Posterior vena cava (tissue), 2 donors: ENCODE measurements at regions of chr19 and their contacts with region 1.

Region 1: GRCh38 chr19:34482380-34483250 is 1.1 kb downstream of the WTIP start:
- DNase-seq: peak; percentile 54

Region 2: DNA sequence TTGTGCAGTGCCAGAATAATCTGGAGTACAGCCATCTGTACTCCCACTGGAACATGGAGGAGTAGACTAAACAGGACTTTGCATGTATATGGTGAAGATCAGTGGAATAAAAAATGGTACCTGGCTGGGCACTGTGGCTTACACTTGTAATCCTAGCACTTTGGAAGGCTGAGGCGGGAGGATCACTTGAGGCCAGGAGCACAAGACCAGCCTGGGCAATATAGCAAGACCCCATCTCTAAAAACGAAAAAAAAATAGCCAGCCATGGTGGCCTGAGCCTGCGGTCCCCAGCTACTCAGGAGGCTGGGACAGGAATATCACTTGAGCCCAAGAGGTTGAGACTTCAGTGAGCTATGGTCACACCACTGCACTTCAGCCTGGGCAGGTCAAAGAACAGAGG is 34.4 kb before region 1 on chr19:
- intact Hi-C with region 1: no loop called
- DNase-seq: no peak

Region 3: GRCh38 chr19:34497611-34498381 is 15.2 kb after region 1 on chr19:
- intact Hi-C with region 1: loop called in 1 of 2 experiments (anchors 1 kb)
- DNase-seq: peak; percentile 76